Mammary epithelial cell (primary cell): ENCODE measurements at regions of chr6 and their contacts with region 1.

Region 1: DNA sequence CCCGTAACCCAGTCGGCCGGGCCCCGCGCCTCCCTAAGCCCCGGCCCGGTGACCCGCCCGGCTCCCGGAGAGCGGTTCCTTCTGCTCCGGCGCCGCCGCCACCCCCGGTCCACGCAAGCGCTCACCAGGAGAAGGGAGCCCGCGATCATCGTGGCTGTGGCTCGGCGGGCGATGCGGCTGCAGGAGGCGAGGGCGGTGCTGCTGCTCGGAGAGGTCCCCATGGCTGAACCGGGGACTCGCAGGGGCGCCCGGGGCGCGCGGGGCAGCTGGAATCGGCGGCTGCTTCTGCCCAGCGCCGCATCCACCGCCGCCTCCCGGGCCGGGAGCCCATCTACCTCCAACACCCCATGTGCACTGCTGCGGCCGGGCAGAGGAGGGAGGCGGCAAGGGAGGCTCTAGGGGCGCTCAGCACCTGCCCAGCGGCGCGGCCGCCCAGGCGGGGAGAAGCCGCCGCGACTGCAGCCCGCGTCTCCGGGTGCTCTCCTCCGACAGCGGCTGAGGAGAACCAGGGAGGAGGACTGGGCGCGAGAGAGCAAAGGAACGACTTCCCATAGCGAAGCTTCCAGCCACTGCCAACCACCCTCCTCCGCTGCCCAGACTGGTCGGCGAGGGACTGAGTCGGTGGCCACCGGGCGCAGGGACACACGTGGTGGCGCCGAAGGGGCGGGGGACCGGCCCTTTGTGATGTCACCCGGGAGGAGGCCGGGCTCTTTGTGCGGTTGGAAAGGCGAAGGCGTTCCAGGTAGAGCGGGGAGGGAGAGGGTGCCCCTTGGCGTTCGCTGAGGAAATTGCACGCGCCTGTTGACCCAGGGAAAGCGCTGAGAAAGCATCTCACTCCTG is at the start of gene TNFRSF21:
- DNase-seq: peak; percentile 92
- H3K4me3 ChIP-seq: peak within 1 kb of the TSS; percentile 61 to 90 (median 85)
- H3K27ac ChIP-seq: peak within 1 kb of the TSS; percentile 60
- H3K4me1 ChIP-seq: peaks cover 21% of the 10 kb centered on the region
- H3K27me3 ChIP-seq: no peaks in the 10 kb centered on the region
- CTCF ChIP-seq: peak; percentile 80 to 98
- total RNA-seq, gene TNFRSF21: 70.3 to 188 TPM

Region 2: DNA sequence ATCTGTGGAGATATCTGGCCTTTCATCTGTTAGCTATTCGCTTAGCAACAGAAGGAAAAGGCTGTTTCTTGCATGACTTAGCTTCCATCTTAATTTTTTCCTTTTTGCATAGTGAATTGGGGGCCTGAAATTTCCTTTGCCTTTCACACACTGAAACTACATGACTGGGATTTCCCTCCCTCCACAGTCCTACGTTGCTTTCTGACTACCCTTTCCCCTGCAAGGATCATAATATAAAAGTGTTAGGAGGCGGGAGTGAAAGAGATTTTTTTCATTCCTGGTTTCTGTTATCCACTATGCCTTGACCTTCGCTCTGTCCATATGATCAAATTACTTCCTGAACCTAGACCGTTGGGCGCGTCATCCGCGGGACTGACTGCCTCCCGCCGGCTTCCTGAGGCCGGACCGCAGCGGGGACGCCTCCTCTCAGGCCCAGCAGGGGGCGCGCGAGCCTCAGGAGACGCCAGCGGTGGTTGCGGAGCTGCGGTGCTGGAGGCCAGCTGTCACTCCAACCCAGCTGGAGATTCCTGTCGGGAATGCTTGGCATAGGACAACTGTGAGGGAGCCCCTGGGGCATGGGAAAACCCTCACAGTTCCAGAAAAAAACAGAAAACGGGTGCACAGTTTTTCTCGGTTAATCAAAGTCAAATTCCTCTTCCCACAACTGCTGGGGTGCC is 460.7 kb before region 1 on chr6:
- CTCF ChIA-PET with region 1: no interaction called
- dilution Hi-C with region 1: no loop called
- in situ Hi-C with region 1: loop called (anchors 25 kb)
- intact Hi-C with region 1: loop called (anchors 1 kb)
- DNase-seq: peak; percentile 73
- H3K4me3 ChIP-seq: no peak overlapping the region
- H3K27ac ChIP-seq: no peak overlapping the region
- H3K4me1 ChIP-seq: peaks cover 15% of the 10 kb centered on the region
- H3K27me3 ChIP-seq: no peaks in the 10 kb centered on the region
- CTCF ChIP-seq: peak; percentile 69 to 96

Region 3: DNA sequence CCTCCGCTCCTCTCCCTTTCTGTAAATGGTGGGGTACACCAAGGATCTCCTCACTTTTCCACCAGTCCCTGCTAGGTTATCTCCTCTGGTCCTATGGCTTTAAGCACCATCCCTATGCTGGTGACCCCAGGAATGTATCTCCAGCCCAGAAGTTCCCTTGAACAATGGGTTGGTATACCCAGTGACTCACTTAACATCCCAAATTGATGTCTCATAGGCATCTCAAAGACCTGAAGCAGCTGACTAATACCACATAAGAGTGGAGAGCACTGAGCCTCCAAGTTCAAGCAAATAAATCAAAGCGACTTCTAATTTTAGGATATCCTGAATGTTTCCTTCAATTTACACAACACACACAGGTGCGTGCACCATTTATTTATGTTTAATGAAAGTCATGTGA is 315.7 kb before region 1 on chr6:
- CTCF ChIA-PET with region 1: no interaction called
- dilution Hi-C with region 1: no loop called
- in situ Hi-C with region 1: no loop called
- intact Hi-C with region 1: loop called (anchors 2 kb)
- DNase-seq: peak; percentile 95
- H3K4me3 ChIP-seq: no peak overlapping the region
- H3K27ac ChIP-seq: peak overlapping the region; percentile 77
- H3K4me1 ChIP-seq: peaks cover 41% of the 10 kb centered on the region
- H3K27me3 ChIP-seq: no peaks in the 10 kb centered on the region
- CTCF ChIP-seq: no peak

Region 4: GRCh38 chr6:47047479-47048407 is 261.8 kb before region 1 on chr6:
- CTCF ChIA-PET with region 1: interaction called, 3 read pairs
- dilution Hi-C with region 1: no loop called
- in situ Hi-C with region 1: no loop called
- intact Hi-C with region 1: loop called (anchors 1 kb)
- DNase-seq: peak; percentile 75
- H3K4me3 ChIP-seq: no peak overlapping the region
- H3K27ac ChIP-seq: peak overlapping the region; percentile 37
- H3K4me1 ChIP-seq: peaks cover 44% of the 10 kb centered on the region
- H3K27me3 ChIP-seq: no peaks in the 10 kb centered on the region
- CTCF ChIP-seq: peak; percentile 83 to 86

Region 5: GRCh38 chr6:47174502-47175023 is 134.9 kb before region 1 on chr6:
- CTCF ChIA-PET with region 1: no interaction called
- dilution Hi-C with region 1: no loop called
- in situ Hi-C with region 1: no loop called
- intact Hi-C with region 1: no loop called
- DNase-seq: no peak
- H3K4me3 ChIP-seq: no peak overlapping the region
- H3K27ac ChIP-seq: no peak overlapping the region
- H3K4me1 ChIP-seq: peaks cover 23% of the 10 kb centered on the region
- H3K27me3 ChIP-seq: no peaks in the 10 kb centered on the region
- CTCF ChIP-seq: no peak

Region 6: GRCh38 chr6:47188588-47189021 is 120.9 kb before region 1 on chr6:
- CTCF ChIA-PET with region 1: no interaction called
- dilution Hi-C with region 1: no loop called
- in situ Hi-C with region 1: loop called in 1 of 2 experiments (anchors 10 kb)
- intact Hi-C with region 1: loop called (anchors 1 kb)
- DNase-seq: peak; percentile 99
- H3K4me3 ChIP-seq: no peak overlapping the region
- H3K27ac ChIP-seq: peak overlapping the region; percentile 64
- H3K4me1 ChIP-seq: peaks cover 29% of the 10 kb centered on the region
- H3K27me3 ChIP-seq: no peaks in the 10 kb centered on the region
- CTCF ChIP-seq: peak in 1 of 2 donors; percentile 11

Region 7: DNA sequence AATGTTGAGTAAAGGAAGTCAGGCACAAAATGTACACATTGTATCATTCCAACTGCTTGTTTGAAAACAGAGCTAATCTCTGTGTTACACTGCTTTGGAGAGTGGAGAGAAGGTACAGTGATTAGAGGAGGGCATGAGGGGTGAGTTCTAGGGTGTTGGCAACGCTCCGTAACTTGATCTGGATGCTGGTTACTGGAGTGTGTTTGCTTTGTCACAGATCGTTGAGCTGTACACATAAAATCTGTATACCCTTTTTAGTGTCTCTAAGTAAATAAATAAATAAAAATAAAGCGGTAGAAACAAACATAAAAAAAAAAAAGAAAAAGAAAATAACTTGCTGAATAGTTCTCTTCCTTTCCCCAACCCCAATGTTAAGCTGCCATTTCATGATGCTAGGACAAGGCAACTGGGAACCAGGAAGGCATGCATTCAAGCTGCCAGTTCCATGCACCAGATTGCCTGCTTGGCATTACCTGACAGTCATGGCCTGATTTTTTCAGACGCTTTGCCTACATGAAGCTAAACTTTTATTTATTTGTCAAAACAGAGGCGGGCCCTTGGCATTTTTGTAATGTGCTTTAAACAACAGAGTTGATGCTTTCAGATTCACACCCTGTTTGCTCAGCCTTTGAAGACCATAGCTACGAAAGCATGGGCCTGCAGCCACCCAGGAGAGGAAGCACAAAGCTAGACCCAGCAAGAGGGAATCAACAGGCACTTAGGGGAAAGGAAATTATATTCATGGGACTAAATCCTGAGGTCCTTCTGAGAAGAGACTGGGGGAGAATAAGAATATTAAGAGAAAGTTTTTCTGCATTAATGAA is 21.0 kb before region 1 on chr6:
- CTCF ChIA-PET with region 1: no interaction called
- dilution Hi-C with region 1: no loop called
- in situ Hi-C with region 1: no loop called
- intact Hi-C with region 1: no loop called
- DNase-seq: no peak
- H3K4me3 ChIP-seq: no peak overlapping the region
- H3K27ac ChIP-seq: no peak overlapping the region
- H3K4me1 ChIP-seq: peaks cover 15% of the 10 kb centered on the region
- H3K27me3 ChIP-seq: no peaks in the 10 kb centered on the region
- CTCF ChIP-seq: no peak